ENCODE measurements at regions of chr2 and their contacts with region 1.

Region 1: GRCh38 chr2:27322766-27323595 is at the start of gene MPV17:
- DNase-seq: peak; percentile 91
- ATAC-seq: peak; percentile 80
- H3K4me3 ChIP-seq: peak within 1 kb of the TSS; percentile 63
- H3K27ac ChIP-seq: peak within 1 kb of the TSS; percentile 97
- H3K4me1 ChIP-seq: peaks cover 7% of the 10 kb centered on the region
- H3K27me3 ChIP-seq: no peaks in the 10 kb centered on the region
- CTCF ChIP-seq: no peak
- POLR2A ChIP-seq: peak; percentile 92
- RAD21 ChIP-seq: no peak
- total RNA-seq, gene MPV17: 70.4 and 80.5 TPM in 2 replicates

Region 2: GRCh38 chr2:27356382-27357181 is 33.6 kb after region 1 on chr2 and contains the start of gene GTF3C2:
- CTCF ChIA-PET with region 1: no interaction called
- POLR2A ChIA-PET with region 1: no interaction called
- dilution Hi-C with region 1: no loop called
- in situ Hi-C with region 1: no loop called
- intact Hi-C with region 1: loop called (anchors 5 kb)
- DNase-seq: peak; percentile 97
- ATAC-seq: peak; percentile 92
- H3K4me3 ChIP-seq: peak within 1 kb of the TSS; percentile 88
- H3K27ac ChIP-seq: peak within 1 kb of the TSS; percentile 95
- H3K4me1 ChIP-seq: peaks cover 8% of the 10 kb centered on the region
- H3K27me3 ChIP-seq: no peaks in the 10 kb centered on the region
- CTCF ChIP-seq: 0 out of 2 replicates have a peak, but pooled peaks have one; percentile 0
- POLR2A ChIP-seq: 0 out of 2 replicates have a peak, but pooled peaks have one; percentile 91
- RAD21 ChIP-seq: no peak
- total RNA-seq, gene GTF3C2: 23.1 and 25.5 TPM in 2 replicates

Region 3: GRCh38 chr2:27370026-27370815 is 47.2 kb after region 1 on chr2 and contains the starts of genes EIF2B4 and SNX17:
- CTCF ChIA-PET with region 1: interaction called, 3 read pairs
- POLR2A ChIA-PET with region 1: interaction called, 4 read pairs
- dilution Hi-C with region 1: no loop called
- in situ Hi-C with region 1: no loop called
- intact Hi-C with region 1: loop called (anchors 1 kb)
- DNase-seq: peak; percentile 99
- ATAC-seq: peak; percentile 94
- H3K4me3 ChIP-seq: peak within 1 kb of the TSS; percentile 71
- H3K27ac ChIP-seq: peak within 1 kb of the TSS; percentile 84
- H3K4me1 ChIP-seq: peaks cover 8% of the 10 kb centered on the region
- H3K27me3 ChIP-seq: no peaks in the 10 kb centered on the region
- CTCF ChIP-seq: peak; percentile 96
- POLR2A ChIP-seq: peak; percentile 80
- RAD21 ChIP-seq: peak; percentile 66
- total RNA-seq, gene EIF2B4: 47.9 and 48.9 TPM in 2 replicates
- total RNA-seq, gene SNX17: 130 and 131 TPM in 2 replicates

Region 4: DNA sequence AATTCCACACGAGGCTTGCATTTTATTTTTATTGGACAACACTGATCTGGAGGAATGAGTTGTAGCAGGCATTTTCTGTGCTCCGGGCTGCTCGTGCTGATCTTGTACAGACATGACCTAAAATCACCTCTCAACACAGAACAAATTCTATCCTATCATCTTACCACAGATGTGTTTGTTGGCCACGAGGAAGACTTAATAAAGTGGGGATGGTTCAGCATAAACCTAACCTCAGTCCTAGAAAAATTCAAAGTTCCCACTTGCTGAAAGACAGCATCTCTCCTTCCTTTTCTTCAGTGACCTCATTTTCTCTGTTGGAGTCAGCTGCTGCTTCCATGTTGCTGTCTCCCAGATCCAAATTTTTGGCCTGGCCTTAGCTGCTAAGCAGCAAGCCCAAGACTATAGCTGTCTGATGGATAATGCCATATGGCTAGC is 521.9 kb after region 1 on chr2:
- CTCF ChIA-PET with region 1: no interaction called
- POLR2A ChIA-PET with region 1: no interaction called
- dilution Hi-C with region 1: no loop called
- in situ Hi-C with region 1: no loop called
- intact Hi-C with region 1: no loop called
- DNase-seq: peak; percentile 11
- ATAC-seq: no peak
- H3K4me3 ChIP-seq: no peak overlapping the region
- H3K27ac ChIP-seq: no peak overlapping the region
- H3K4me1 ChIP-seq: 0 out of 2 replicates have a peak, but pooled peaks cover 4% of the 10 kb centered on the region
- H3K27me3 ChIP-seq: no peaks in the 10 kb centered on the region
- CTCF ChIP-seq: no peak
- POLR2A ChIP-seq: no peak
- RAD21 ChIP-seq: no peak

Measured in IMR-90 (cell line).